Activated naive CD8-positive, alpha-beta T cell treated with anti-CD3 and anti-CD28 coated beads, Interleukin-2, amount 10 ng/mL, durations not matched to agents 7 days and 5 days (primary cell): ENCODE measurements at regions of chr20 and their contacts with region 1.

Region 1: DNA sequence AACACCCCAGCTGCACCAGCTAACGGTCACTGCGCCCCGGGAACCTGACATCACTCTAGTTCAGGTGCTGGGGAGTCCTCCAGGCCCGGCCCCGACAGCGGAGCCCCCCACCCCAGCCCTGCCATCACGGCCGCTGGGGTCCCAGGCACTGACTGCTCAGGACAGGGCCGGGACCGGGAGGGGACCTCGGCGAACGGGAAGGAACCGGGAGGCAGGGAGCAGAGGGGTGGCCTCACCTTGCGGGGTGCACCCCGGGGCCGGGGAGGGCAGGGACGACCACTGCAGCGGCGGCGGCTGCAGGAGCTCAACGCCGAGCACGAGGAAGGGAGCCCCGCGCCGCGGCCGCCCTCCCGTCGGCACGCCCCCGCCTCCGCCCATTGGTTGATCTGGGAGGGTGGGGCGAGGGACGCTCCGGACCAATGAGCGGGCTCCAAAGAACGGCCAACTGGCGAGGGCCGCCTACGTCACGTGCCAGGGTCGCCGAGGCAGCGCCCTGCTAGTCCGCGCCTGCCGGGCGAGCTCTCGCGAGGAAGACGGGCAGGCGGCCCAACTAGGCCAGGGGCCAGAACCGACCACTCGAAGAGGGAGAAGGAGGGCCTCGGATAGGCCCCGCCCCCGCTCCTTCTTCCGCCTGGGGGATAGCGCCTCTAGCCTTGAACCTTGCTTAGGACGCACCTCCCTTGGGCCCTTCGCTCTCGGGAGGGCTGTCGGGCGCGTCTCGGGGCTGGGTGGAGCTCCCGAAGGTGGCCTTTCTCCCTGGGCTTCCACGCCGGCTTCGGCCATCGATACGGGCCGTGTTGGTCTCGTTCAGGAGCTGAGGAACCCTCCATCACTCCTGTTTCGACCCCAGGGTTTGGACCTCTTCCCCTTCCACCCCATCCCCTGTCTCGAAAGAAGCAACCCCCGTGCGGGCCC is at the start of gene ADISSP:
- DNase-seq: peak; percentile 98
- ATAC-seq: peak; percentile 96
- H3K4me3 Mint-ChIP-seq: peak within 1 kb of the TSS; percentile 91
- H3K27ac Mint-ChIP-seq: peak within 1 kb of the TSS; percentile 93
- H3K4me1 Mint-ChIP-seq: peaks cover 17% of the 10 kb centered on the region
- H3K27me3 Mint-ChIP-seq: peaks cover 11% of the 10 kb centered on the region
- total RNA-seq, gene ADISSP: 21.9 to 22.1 TPM

Region 2: DNA sequence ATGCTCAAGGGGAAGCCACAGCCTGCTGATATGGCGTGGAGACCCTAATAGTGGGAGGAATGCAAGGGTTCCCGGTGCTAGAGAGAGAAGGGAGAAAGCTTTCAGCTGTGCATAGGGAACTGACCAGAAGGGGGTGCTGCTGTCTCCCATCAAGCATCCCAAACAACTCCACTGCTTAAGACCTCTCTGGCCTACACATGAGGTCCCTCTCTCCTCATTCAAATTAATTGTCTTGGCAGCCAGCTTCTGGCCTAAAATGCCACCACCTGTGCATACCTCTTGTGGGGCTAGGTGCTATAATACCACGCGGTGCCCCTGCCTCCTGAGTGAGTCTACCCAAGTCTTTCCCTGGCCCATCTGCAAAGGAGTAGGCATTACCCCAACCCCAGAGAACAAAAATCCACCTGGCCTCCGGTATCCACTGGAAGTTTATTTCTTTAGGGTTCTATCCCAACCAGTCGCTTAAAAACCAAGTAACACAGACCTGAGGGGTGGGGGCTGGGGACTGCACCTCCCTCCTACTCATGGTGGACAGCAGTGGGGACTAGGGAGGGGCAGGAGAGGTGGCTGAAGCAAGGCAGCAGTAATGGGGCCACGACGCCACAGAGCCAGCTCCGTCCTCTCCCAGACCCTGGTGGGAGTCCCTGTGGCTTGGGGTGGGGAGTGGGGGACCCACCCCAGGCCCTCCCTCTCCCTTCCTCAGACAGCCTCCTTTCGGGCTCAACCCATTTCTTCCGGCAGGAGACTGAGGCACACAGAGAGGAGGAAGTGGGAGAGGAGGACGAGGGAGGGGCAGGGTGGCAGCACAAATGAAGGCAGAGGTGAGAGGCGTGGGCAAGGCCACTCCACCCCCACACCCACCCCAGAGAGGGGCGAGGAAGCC is 14.3 kb before region 1 on chr20:
- POLR2A ChIA-PET with region 1: interaction called, 12 read pairs
- DNase-seq: no peak
- ATAC-seq: peak; percentile 68
- H3K4me3 Mint-ChIP-seq: no peak overlapping the region
- H3K27ac Mint-ChIP-seq: no peak overlapping the region
- H3K4me1 Mint-ChIP-seq: peaks cover 7% of the 10 kb centered on the region
- H3K27me3 Mint-ChIP-seq: no peaks in the 10 kb centered on the region

Region 3: GRCh38 chr20:3781153-3781910 is 13.6 kb after region 1 on chr20 and contains the start of gene SPEF1:
- POLR2A ChIA-PET with region 1: interaction called, 53 read pairs
- DNase-seq: no peak
- ATAC-seq: peak; percentile 34
- H3K4me3 Mint-ChIP-seq: peak within 1 kb of the TSS; percentile 37
- H3K27ac Mint-ChIP-seq: no peak within 1 kb of the TSS
- H3K4me1 Mint-ChIP-seq: peaks cover 33% of the 10 kb centered on the region
- H3K27me3 Mint-ChIP-seq: peaks cover 24% of the 10 kb centered on the region
- total RNA-seq, gene SPEF1: not detected

Region 4: GRCh38 chr20:3786665-3787323 is 19.1 kb after region 1 on chr20 and contains the start of gene CENPB:
- POLR2A ChIA-PET with region 1: interaction called, 53 read pairs
- DNase-seq: peak; percentile 99
- ATAC-seq: peak; percentile 94
- H3K4me3 Mint-ChIP-seq: peak within 1 kb of the TSS; percentile 78
- H3K27ac Mint-ChIP-seq: peak within 1 kb of the TSS; percentile 65
- H3K4me1 Mint-ChIP-seq: peaks cover 26% of the 10 kb centered on the region
- H3K27me3 Mint-ChIP-seq: peaks cover 7% of the 10 kb centered on the region
- total RNA-seq, gene CENPB: 63.3 to 65.7 TPM

Region 5: DNA sequence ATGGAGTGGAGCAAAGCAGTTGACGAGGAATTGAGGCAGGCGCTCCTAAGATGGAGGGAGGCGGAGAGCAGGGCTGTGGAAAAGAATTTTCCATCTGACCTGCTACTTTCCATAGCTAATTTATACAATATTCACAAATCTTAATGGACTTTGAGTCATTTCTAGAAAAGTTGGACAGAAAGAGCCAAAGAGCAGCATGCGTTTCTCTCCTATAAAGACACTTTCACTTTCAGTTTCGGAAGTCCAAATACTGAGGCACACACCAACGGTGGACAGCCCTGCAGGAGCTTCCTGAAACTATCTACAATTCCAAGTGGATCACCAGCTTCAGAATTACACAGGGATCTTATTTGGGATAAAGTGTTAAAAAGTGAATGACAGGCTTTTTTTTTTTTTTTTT is 165.0 kb after region 1 on chr20:
- POLR2A ChIA-PET with region 1: no interaction called
- DNase-seq: no peak
- ATAC-seq: no peak
- H3K4me3 Mint-ChIP-seq: peak overlapping the region; percentile 39
- H3K27ac Mint-ChIP-seq: peak overlapping the region; percentile 80
- H3K4me1 Mint-ChIP-seq: peaks cover 20% of the 10 kb centered on the region
- H3K27me3 Mint-ChIP-seq: no peaks in the 10 kb centered on the region